ENCODE measurements at regions of chr9 and their contacts with region 1.

Region 1: DNA sequence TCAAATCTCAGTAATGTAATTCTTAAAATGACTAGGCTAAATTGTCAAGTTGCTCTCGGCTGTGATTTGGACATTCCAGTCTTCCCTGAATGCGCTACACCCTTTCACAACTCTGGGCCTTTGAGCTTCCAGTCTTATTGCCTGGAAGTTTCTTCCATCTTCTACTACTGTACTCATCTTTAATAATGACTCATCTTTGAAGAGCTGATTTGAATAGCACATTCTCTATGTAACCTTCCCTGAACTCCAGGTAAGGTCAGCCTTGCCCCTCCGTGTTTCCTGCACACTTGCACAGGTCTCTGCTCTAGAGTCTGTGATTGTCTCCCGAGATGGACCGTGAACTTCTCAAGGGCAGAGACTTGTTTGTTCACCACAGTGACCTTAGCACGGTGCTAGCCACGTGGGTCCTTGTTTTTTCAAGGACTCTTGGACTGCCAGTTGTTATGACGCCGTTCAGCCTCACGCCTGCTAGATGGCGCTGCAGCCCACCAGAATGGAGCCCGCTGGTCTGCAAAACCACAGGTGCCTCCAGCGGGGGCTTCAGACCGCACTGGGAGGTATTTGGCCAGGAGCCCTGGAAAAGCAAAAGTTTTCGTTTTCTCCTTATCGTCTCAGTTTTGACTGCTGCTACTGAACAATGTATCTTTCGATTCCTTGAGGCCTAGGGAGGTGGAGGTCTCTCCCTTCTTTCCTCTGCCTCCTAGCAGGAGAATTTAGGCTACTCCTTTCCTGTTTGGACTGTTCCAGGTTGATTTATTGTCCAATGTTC is 44.4 kb downstream of the SEC61B start:
- DNase-seq: peak; percentile 68
- ATAC-seq: peak; percentile 81
- H3K4me3 ChIP-seq: no peak overlapping the region
- H3K27ac ChIP-seq: no peak overlapping the region
- H3K4me1 ChIP-seq: peaks cover 2% of the 10 kb centered on the region; the same call in 1 of the 2 replicates
- H3K27me3 ChIP-seq: no peaks in the 10 kb centered on the region
- CTCF ChIP-seq: peak; percentile 84
- POLR2A ChIP-seq: 0 out of 2 replicates have a peak, but pooled peaks have one; percentile 23
- RAD21 ChIP-seq: peak; percentile 96

Region 2: GRCh38 chr9:98504298-98505282 is 761.8 kb before region 1 on chr9:
- CTCF ChIA-PET with region 1: no interaction called
- POLR2A ChIA-PET with region 1: no interaction called
- dilution Hi-C with region 1: no loop called
- in situ Hi-C with region 1: no loop called
- intact Hi-C with region 1: no loop called
- DNase-seq: no peak
- ATAC-seq: no peak
- H3K4me3 ChIP-seq: no peak overlapping the region
- H3K27ac ChIP-seq: no peak overlapping the region
- H3K4me1 ChIP-seq: peaks cover 23% of the 10 kb centered on the region
- H3K27me3 ChIP-seq: no peaks in the 10 kb centered on the region
- CTCF ChIP-seq: no peak
- POLR2A ChIP-seq: no peak
- RAD21 ChIP-seq: no peak

Region 3: DNA sequence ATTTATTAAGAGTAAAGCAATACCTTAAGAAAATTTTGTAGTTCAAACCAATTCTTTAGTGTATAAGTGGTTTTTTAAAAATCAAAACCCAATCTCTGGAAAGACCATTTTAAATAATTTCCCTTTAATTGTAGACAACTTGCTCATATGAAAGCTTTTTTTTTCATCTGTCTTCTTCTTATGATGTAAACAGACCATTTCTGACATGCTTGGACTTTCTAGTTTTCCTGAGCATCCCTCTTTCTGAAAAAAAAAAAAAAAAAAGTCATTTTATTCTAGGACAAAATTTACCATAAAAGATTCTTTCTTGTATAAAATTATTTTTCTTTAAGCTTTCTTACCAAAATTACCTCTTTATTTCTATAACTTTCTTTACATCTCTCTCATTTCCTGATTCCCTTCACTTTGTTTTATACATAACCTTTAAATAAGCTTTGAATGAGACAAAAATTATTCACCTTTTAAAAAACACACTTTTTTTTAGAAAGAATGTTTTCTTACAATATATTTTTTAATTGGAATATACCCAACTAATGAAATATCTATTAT is 255.2 kb before region 1 on chr9:
- CTCF ChIA-PET with region 1: no interaction called
- POLR2A ChIA-PET with region 1: no interaction called
- dilution Hi-C with region 1: no loop called
- in situ Hi-C with region 1: no loop called
- intact Hi-C with region 1: no loop called
- DNase-seq: peak; percentile 48
- ATAC-seq: no peak
- H3K4me3 ChIP-seq: no peak overlapping the region
- H3K27ac ChIP-seq: no peak overlapping the region
- H3K4me1 ChIP-seq: no peaks in the 10 kb centered on the region
- H3K27me3 ChIP-seq: no peaks in the 10 kb centered on the region
- CTCF ChIP-seq: no peak
- POLR2A ChIP-seq: no peak
- RAD21 ChIP-seq: no peak

Region 4: DNA sequence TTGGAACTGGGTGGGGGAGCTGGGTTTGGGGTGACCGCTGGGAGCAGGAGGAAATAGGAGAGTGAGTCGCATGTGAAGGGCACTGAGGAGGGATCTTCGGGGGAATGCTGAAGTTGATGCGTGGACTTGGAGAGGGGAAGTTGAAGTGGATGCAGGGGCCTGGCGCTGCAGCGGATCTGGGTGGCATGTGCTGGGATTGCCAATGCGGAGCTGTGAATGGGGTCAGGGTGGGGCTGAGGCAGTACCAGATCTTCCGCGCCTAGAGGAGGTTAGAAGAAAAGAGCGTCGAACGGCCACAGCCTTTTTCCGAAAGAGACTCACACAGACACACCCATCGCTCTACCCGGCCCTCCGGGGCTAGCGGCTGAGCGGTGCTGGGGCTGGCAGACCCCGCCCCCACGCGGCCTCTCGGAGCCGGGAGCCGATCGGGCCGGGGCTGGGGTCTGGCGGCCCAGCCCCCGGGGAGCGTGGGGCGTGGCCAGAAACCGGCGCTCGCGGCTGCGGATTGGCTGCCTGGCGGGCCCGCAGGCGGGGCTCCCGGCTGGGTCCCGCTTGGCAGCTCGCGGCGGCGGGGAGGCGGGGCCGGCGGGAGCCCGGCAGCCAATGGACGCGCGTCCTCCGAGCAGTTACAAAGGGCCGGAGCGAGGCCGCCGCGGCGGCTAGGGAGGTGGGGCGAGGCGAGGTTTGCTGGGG is 161.8 kb before region 1 on chr9 and contains the start of gene TGFBR1:
- CTCF ChIA-PET with region 1: no interaction called
- POLR2A ChIA-PET with region 1: no interaction called
- dilution Hi-C with region 1: no loop called
- in situ Hi-C with region 1: no loop called
- intact Hi-C with region 1: no loop called
- DNase-seq: peak; percentile 89
- ATAC-seq: peak; percentile 89
- H3K4me3 ChIP-seq: peak within 1 kb of the TSS; percentile 67
- H3K27ac ChIP-seq: peak within 1 kb of the TSS; percentile 95
- H3K4me1 ChIP-seq: peaks cover 14% of the 10 kb centered on the region
- H3K27me3 ChIP-seq: no peaks in the 10 kb centered on the region
- CTCF ChIP-seq: no peak
- POLR2A ChIP-seq: peak; percentile 93
- RAD21 ChIP-seq: no peak; the same call in 1 of the 2 replicates
- total RNA-seq, gene TGFBR1: 57.8 and 75.3 TPM in 2 replicates

Region 5: DNA sequence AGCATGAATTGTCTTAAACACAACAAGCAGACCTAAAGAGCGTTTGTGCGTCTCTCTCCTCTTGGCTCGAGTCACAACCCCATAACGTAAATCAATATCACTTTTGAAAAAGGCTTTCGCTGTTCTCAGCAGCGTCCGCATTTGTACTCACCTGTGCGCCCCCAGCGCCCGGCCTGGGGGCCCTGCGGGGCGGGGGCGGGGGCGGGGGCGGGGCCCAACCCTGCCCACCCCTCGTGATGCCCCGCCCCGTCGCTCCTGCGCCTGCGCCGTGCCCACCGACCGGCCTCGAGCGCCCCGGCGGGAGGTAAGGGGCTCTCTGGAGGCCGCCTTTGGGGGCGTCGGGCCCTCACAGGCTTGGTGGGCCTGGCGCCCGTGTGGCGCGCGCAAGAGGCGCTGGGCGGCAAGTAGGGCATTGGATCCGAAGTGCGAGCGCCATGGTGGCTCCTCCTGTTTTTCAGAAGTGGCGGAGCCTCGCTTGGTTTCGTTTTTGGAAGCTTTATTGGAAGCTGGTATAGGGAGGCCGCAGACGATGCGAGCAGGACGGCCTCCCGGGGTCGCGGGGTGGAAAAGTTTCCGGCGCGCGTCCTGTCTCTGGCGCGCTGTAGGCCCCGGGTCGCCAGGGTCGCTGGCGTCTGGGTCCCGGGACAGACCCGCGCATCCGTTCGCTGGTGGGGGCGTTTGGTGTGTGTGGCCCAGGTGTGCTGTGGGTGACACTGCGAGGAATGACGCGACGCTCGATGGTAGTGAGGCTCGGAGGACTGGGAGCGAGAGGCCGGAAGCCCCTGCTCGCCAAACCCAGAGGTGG is 640.2 kb after region 1 on chr9 and contains the start of gene STX17:
- CTCF ChIA-PET with region 1: no interaction called
- POLR2A ChIA-PET with region 1: no interaction called
- dilution Hi-C with region 1: no loop called
- in situ Hi-C with region 1: no loop called
- intact Hi-C with region 1: loop called (anchors 10 kb)
- DNase-seq: peak; percentile 69
- ATAC-seq: peak; percentile 97
- H3K4me3 ChIP-seq: peak within 1 kb of the TSS; percentile 99
- H3K27ac ChIP-seq: peak within 1 kb of the TSS; percentile 91
- H3K4me1 ChIP-seq: no peaks in the 10 kb centered on the region
- H3K27me3 ChIP-seq: 0 out of 2 replicates have a peak, but pooled peaks cover 2% of the 10 kb centered on the region
- CTCF ChIP-seq: no peak
- POLR2A ChIP-seq: peak; percentile 67
- RAD21 ChIP-seq: no peak
- total RNA-seq, gene STX17: 11.7 and 17.2 TPM in 2 replicates

Region 6: GRCh38 chr9:100011062-100011681 is 744.7 kb after region 1 on chr9:
- CTCF ChIA-PET with region 1: no interaction called
- POLR2A ChIA-PET with region 1: no interaction called
- dilution Hi-C with region 1: no loop called
- in situ Hi-C with region 1: loop called (anchors 25 kb)
- intact Hi-C with region 1: loop called (anchors 1 kb)
- DNase-seq: peak; percentile 67
- ATAC-seq: no peak
- H3K4me3 ChIP-seq: no peak overlapping the region
- H3K27ac ChIP-seq: no peak overlapping the region
- H3K4me1 ChIP-seq: peaks cover 7% of the 10 kb centered on the region
- H3K27me3 ChIP-seq: no peaks in the 10 kb centered on the region
- CTCF ChIP-seq: peak; percentile 60
- POLR2A ChIP-seq: no peak
- RAD21 ChIP-seq: peak; percentile 66

Region 7: DNA sequence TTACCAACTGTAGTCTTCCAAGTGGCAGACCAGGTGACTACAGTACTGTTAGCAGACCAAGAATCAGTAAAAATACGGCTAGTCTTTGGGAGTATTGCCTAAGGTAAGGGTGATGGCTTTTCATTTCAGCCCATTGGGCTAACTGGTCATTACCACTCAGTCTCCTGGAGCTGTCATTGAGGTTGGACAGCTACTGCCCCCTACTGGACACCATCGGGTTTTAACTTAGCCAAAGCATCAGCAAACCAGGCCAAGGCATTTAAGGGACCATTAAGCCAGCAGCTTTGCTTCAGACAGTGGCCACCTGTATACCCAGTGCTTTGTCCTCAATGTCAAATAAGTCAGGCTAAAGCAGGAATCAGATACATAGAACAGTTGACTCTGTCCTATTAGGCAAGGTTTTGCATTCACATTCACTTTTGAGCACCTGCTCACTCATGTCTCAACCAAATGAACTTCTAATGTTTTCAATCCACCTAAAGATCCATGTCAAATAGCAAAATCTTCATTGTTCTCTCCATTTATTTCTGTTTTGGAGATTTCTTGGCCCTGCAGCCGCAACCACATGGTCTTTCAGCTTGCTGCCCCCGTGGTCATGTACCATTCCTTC is 949.8 kb after region 1 on chr9:
- CTCF ChIA-PET with region 1: no interaction called
- POLR2A ChIA-PET with region 1: no interaction called
- dilution Hi-C with region 1: no loop called
- in situ Hi-C with region 1: loop called (anchors 25 kb)
- intact Hi-C with region 1: loop called (anchors 5 kb)
- DNase-seq: peak; percentile 45
- ATAC-seq: 0 out of 2 replicates have a peak, but pooled peaks have one; percentile 22
- H3K4me3 ChIP-seq: no peak overlapping the region
- H3K27ac ChIP-seq: no peak overlapping the region
- H3K4me1 ChIP-seq: peaks cover 6% of the 10 kb centered on the region
- H3K27me3 ChIP-seq: no peaks in the 10 kb centered on the region
- CTCF ChIP-seq: peak; percentile 56
- POLR2A ChIP-seq: no peak
- RAD21 ChIP-seq: peak; percentile 63

Region 8: GRCh38 chr9:100222674-100223073 is 956.2 kb after region 1 on chr9:
- CTCF ChIA-PET with region 1: no interaction called
- POLR2A ChIA-PET with region 1: no interaction called
- dilution Hi-C with region 1: no loop called
- in situ Hi-C with region 1: loop called (anchors 25 kb)
- intact Hi-C with region 1: loop called (anchors 5 kb)
- DNase-seq: peak; percentile 53
- ATAC-seq: 0 out of 2 replicates have a peak, but pooled peaks have one; percentile 27
- H3K4me3 ChIP-seq: no peak overlapping the region
- H3K27ac ChIP-seq: no peak overlapping the region
- H3K4me1 ChIP-seq: peaks cover 2% of the 10 kb centered on the region
- H3K27me3 ChIP-seq: no peaks in the 10 kb centered on the region
- CTCF ChIP-seq: peak; percentile 61
- POLR2A ChIP-seq: no peak
- RAD21 ChIP-seq: peak; percentile 64

Measured in IMR-90 (cell line).